Tibial artery (tissue), 4 donors: ENCODE measurements at regions of chr19 and their contacts with region 1.

Region 1: GRCh38 chr19:17419621-17420466 is at the start of gene MVB12A:
- DNase-seq: peak; percentile 96 to 99
- H3K4me3 ChIP-seq: peak within 1 kb of the TSS; percentile 66 to 88
- H3K27ac ChIP-seq: peak within 1 kb of the TSS; percentile 66 to 82
- H3K4me1 ChIP-seq: peaks cover 0 to 17% (median 7%) of the 10 kb centered on the region in 4 donors
- H3K27me3 ChIP-seq: no peaks in the 10 kb centered on the region
- CTCF ChIP-seq: no peak

Region 2: DNA sequence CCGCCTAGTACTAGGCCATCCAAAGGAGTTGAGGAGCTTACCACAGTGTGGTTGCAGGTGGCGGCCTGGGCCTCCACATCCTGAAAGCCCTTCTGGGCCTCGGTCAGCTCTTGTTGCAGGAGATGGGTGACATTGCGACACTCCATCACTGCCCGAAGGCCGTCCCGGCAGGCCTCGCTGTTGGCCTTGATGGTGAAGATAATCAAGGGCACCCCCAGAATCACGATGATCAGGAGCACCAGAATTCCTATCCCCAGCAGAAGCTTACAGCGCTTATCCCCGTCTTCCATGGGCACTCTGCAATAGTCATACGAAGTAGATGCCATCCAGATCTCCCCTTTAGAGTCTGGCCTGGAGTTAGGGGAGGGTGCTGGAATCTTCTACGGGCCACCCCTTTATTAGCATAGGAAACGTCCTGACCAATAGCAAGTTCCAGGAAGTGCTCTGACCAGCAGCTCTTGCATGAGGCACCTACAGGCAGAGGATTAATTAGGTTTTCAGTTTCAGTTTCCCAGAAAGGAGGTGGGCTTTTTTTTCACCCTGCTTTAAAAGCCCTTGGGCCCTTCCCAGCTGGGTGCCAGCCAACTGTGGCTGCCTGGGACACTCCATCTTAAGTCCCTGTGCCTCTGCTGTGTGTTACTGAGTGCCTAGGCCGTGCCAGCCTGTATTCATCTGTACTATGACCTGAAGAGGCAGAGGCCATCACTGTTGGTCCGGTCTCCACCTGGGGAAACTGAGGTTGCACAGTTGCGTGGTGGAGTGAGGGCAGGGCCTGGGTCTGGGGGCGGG is 14.4 kb before region 1 on chr19 and contains the start of gene BST2:
- intact Hi-C with region 1: no loop called
- DNase-seq: peak in 1 of 2 donors; percentile 60
- H3K4me3 ChIP-seq: peak within 1 kb of the TSS; percentile 29 to 41
- H3K27ac ChIP-seq: peak within 1 kb of the TSS in 1 of 2 donors; percentile 25
- H3K4me1 ChIP-seq: peaks cover 0 to 9% (median 0%) of the 10 kb centered on the region in 4 donors
- H3K27me3 ChIP-seq: peaks cover 0 to 18% of the 10 kb centered on the region in 2 donors
- CTCF ChIP-seq: no peak

Region 3: GRCh38 chr19:17469481-17470067 is 49.7 kb after region 1 on chr19:
- intact Hi-C with region 1: loop called (anchors 5 kb)
- DNase-seq: peak; percentile 99
- H3K4me3 ChIP-seq: peak overlapping the region; percentile 96 to 99
- H3K27ac ChIP-seq: peak overlapping the region; percentile 92 to 95
- H3K4me1 ChIP-seq: peaks cover 0 to 36% (median 26%) of the 10 kb centered on the region in 4 donors
- H3K27me3 ChIP-seq: no peaks in the 10 kb centered on the region
- CTCF ChIP-seq: no peak

Region 4: DNA sequence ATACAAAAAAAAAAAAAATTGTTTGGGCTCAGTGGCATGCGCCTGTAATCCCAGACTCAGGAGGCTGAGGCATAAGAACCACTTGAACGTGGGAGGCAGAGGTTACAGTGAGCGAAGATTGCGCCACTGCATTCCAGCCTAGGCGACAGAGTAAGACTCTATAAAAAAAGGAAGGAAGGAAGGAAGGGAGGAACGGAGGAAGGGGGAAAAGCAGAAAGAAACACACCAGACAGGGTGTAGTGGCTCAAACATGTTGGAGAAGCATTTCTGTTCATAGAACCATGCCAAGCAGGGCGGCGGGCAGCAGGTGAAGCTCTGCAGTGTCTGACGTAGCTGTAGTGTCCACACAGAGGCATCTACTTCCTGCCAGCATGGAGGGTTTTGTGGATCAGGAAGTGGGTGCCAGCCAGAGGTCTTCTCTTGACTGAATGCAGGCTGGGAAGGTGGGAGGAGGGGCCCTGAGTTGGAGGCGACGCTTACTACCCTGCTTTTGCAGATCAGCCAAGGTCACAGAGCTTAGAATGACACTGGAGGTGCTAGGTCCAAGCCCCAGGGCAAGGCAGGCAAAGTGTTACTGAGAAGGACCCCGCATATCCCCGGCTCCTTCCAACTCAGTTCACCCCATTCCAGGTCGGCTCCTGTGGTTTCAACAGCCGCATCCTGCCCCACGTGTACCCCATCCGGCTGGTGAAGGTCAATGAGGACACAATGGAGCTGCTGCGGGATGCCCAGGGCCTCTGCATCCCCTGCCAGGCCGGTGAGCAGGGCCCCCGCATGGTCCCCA is 80.0 kb after region 1 on chr19:
- intact Hi-C with region 1: no loop called
- DNase-seq: peak in 1 of 2 donors; percentile 38
- H3K4me3 ChIP-seq: no peak overlapping the region
- H3K27ac ChIP-seq: no peak overlapping the region
- H3K4me1 ChIP-seq: peaks cover 0 to 8% (median 3%) of the 10 kb centered on the region in 4 donors
- H3K27me3 ChIP-seq: no peaks in the 10 kb centered on the region
- CTCF ChIP-seq: no peak

Region 5: GRCh38 chr19:17539238-17540117 is 119.6 kb after region 1 on chr19:
- intact Hi-C with region 1: no loop called
- DNase-seq: peak; percentile 92 to 94
- H3K4me3 ChIP-seq: peak overlapping the region; percentile 37 to 56
- H3K27ac ChIP-seq: peak overlapping the region in 1 of 2 donors; percentile 13
- H3K4me1 ChIP-seq: peaks cover 0 to 15% (median 13%) of the 10 kb centered on the region in 4 donors
- H3K27me3 ChIP-seq: peaks cover 0 to 14% of the 10 kb centered on the region in 2 donors
- CTCF ChIP-seq: peak in 1 of 2 experiments; percentile 29